Vagina (tissue), 2 donors: ENCODE measurements at regions of chr16 and their contacts with region 1.

Region 1: GRCh38 chr16:4330277-4330874 is 14.5 kb downstream of the GLIS2 start:
- DNase-seq: no peak
- H3K4me3 ChIP-seq: no peak overlapping the region
- H3K27ac ChIP-seq: no peak overlapping the region
- H3K4me1 ChIP-seq: peaks cover 41% of the 10 kb centered on the region
- H3K27me3 ChIP-seq: no peaks in the 10 kb centered on the region
- CTCF ChIP-seq: peak; percentile 94 to 98 (median 95)
- POLR2A ChIP-seq: no peak

Region 2: DNA sequence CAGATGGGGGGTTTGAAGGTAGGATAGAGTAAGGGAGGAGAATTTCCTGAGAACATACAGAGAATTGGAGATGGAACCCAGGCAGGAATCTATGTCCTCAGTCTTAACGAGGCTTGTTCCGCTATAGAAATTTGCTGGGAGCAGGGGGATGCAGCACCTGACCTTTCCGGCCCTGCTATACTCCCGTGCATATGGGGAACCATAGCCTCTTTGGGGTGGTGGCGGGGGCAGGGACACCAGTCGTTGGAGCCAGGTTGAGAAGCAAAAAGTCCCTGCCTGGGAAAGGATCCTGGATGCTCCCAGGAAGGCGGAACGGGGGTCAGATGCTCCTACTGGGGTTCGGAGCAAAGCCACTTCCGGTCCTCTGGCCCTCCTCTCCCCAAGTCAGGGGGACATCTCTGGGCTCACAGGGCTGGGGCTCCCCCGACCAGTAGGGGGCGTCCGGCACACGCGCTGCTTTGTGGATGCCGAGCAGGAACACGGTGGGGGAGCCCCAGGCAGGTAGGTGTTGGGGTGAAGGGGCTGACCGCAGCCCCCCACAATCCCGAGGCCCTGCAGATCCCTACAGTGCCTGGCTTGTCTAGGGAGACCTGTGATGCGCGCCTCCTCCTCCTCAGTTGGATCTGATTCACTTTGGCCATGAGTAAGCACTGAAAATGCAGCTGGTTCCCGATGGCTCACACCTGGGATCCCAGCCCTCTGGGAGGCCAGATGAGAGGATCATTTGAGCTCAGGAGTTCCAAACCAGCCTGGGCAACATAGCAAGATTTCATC is 42.0 kb before region 1 on chr16:
- intact Hi-C with region 1: loop called (anchors 2 kb)
- DNase-seq: no peak
- H3K4me3 ChIP-seq: peak overlapping the region in 1 of 2 donors; percentile 12
- H3K27ac ChIP-seq: no peak overlapping the region
- H3K4me1 ChIP-seq: peaks cover 24% of the 10 kb centered on the region
- H3K27me3 ChIP-seq: no peaks in the 10 kb centered on the region
- CTCF ChIP-seq: peak; percentile 92 to 97 (median 95)
- POLR2A ChIP-seq: no peak